ENCODE measurements at regions of chr19 and their contacts with region 1.

Region 1: DNA sequence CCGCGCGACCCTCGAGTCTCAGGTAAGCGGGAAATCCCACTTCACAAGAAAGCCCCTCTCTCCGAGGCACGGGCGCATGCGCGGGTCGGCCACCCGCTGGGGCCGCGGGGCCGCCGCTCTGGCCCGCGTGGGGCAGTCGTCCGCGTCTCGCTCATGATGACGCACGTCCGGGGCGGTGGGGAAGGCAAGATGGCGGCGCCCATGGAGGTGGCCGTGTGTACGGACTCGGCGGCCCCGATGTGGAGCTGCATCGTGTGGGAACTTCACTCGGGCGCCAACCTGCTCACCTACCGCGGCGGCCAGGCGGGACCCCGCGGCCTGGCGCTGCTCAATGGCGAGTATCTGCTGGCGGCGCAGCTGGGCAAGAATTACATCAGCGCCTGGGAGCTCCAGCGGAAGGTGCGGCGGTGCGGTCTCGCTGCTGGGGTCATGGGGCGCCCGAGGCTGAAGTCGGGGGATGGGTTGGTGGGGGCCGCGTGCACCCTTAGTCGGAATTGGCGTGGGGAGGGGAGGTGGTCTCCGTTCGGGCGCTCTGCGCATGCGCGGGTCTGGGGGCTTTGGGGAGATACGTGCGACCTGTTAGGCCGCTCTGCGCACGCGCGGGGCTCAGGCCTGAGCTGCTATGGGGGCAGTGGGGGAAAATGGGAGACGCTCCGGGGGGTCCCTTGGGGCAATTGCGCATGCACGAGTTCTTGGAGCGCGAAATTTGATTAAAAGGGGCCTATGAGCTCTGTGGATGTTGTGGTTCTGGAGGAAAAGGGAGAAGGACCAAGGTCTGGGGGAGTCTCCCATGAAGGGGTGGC is at the start of gene WDR18:
- DNase-seq: peak; percentile 79 to 87 (median 81)
- H3K4me3 ChIP-seq: peak within 1 kb of the TSS; percentile 65 to 69
- H3K4me3 Mint-ChIP-seq: peak within 1 kb of the TSS; percentile 89 to 96 (median 92)
- H3K27ac ChIP-seq: peak within 1 kb of the TSS; percentile 75
- H3K27ac Mint-ChIP-seq: peak within 1 kb of the TSS; percentile 84 to 96 (median 90)
- H3K4me1 ChIP-seq: peaks cover 24% of the 10 kb centered on the region
- H3K4me1 Mint-ChIP-seq: peaks cover 4 to 18% (median 12%) of the 10 kb centered on the region in 4 donors
- H3K27me3 ChIP-seq: no peaks in the 10 kb centered on the region
- H3K27me3 Mint-ChIP-seq: no peaks in the 10 kb centered on the region
- total RNA-seq, gene WDR18: 53.9 to 60.3 TPM

Region 2: DNA sequence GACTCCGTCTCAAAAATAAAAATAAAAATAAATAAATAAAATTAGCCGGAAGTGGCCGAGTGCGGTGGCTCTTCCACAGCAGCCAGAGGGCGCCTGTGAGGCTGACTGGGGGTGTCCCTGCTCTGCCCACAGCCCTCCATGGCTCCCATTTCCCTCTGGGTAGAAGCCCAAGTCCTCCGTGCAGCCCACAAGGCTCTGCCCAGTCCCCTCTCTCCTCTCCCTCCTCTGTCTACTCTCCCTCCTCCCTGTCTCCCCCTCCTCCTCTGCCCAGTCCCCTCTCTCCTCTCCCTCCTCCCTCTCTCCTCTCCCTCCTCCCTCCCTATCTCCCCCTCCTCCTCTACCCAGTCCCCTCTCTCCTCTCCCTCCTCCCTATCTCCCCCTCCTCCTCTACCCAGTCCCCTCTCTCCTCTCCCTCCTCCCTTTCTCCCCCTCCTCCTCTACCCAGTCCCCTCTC is 213.0 kb before region 1 on chr19:
- CTCF ChIA-PET with region 1: interaction called, 3 read pairs
- POLR2A ChIA-PET with region 1: no interaction called
- intact Hi-C with region 1: loop called (anchors 1 kb)
- DNase-seq: peak in 3 of 5 donors; percentile 15 to 18 (median 17)
- H3K4me3 ChIP-seq: no peak overlapping the region
- H3K4me3 Mint-ChIP-seq: no peak overlapping the region
- H3K27ac ChIP-seq: no peak overlapping the region
- H3K27ac Mint-ChIP-seq: no peak overlapping the region
- H3K4me1 ChIP-seq: no peaks in the 10 kb centered on the region
- H3K4me1 Mint-ChIP-seq: peaks cover 0 to 4% (median 2%) of the 10 kb centered on the region in 4 donors
- H3K27me3 ChIP-seq: no peaks in the 10 kb centered on the region
- H3K27me3 Mint-ChIP-seq: peaks cover 4% of the 10 kb centered on the region in 2 donors

Region 3: DNA sequence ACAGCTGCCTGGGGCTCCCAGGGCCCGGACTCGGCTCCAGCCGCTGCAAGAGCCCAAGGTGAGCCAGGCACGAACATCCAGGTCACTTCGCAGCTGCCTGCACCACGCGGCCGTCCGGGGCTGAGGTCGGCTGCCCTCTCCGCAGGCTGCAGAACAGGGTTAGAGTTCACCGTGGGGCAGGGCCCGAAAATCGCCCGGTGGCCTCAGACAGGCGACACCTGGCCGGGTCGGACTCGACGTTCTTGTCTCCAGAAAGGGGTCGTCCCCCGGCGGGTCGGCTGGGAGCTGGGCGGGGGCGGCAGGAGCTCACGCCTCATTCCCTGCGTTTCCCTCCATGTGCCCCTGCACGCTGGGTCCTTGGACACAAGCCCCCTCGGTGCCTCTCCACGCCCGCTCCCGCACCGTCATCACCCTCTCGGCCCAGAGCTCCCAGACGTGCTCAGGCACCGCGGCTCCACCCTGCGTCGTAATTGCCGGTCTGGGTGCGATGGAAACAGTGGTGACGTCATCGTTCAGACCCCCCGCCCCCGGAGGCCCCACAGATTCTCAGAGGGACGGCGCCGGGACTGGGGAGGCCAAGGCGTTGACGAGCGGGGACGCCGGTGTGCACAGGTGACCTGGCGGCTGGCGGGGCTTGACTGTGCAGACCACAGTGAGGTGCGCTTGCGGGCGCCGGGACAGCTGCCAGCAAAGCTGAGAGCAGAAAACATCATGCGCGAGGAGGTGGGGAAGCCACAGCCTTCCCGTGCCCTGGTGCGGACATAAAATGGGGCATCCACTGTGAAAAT is 11.9 kb after region 1 on chr19:
- CTCF ChIA-PET with region 1: interaction called, 3 read pairs
- POLR2A ChIA-PET with region 1: interaction called, 34 read pairs
- intact Hi-C with region 1: loop called (anchors 1 kb)
- DNase-seq: peak; percentile 78 to 96 (median 84)
- H3K4me3 ChIP-seq: peak overlapping the region in 1 of 2 donors; percentile 38
- H3K4me3 Mint-ChIP-seq: peak overlapping the region; percentile 55 to 88 (median 74)
- H3K27ac ChIP-seq: peak overlapping the region; percentile 37
- H3K27ac Mint-ChIP-seq: peak overlapping the region; percentile 81 to 99 (median 88)
- H3K4me1 ChIP-seq: peaks cover 21% of the 10 kb centered on the region
- H3K4me1 Mint-ChIP-seq: peaks cover 4 to 26% (median 14%) of the 10 kb centered on the region in 4 donors
- H3K27me3 ChIP-seq: peaks cover 23% of the 10 kb centered on the region
- H3K27me3 Mint-ChIP-seq: peaks cover 16 to 22% of the 10 kb centered on the region in 2 donors

Region 4: DNA sequence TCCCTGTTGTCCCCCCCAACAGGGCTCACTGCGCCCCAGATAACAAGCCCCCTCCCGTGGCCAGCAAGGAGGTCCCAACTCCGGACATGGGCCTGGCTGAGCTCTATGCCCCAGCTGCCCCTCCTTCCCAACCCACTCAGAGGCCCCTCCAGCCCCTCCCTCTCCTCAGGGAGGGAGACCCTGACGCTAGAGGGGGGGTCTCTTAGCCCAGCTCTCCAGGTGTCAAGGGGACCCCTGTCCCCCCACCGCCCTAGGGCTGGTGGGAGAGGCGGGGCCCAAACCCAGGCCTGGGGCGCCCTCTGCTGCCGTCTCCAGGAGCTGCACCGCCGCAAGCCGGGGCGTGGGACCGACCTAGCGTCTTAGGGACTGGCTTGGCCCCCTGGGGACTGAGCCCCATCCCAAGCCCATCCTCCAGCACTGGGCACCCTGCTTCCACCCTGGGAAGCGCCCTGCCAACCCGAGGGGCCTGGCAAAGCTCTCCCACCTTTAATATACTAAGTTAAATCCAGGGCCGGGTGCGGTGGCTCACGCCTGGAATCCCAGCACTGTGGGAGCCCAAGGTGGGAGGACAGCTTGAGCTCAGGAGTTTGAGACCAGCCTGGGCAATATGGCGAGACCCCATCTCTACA is 17.3 kb after region 1 on chr19:
- CTCF ChIA-PET with region 1: interaction called, 3 read pairs
- POLR2A ChIA-PET with region 1: interaction called, 34 read pairs
- intact Hi-C with region 1: loop called (anchors 1 kb)
- DNase-seq: peak; percentile 60 to 71 (median 61)
- H3K4me3 ChIP-seq: no peak overlapping the region
- H3K4me3 Mint-ChIP-seq: no peak overlapping the region
- H3K27ac ChIP-seq: no peak overlapping the region
- H3K27ac Mint-ChIP-seq: peak overlapping the region in 1 of 7 donors; percentile 21
- H3K4me1 ChIP-seq: peaks cover 15% of the 10 kb centered on the region
- H3K4me1 Mint-ChIP-seq: peaks cover 2 to 18% (median 10%) of the 10 kb centered on the region in 4 donors
- H3K27me3 ChIP-seq: peaks cover 26% of the 10 kb centered on the region
- H3K27me3 Mint-ChIP-seq: peaks cover 17 to 19% of the 10 kb centered on the region in 2 donors

Region 5: DNA sequence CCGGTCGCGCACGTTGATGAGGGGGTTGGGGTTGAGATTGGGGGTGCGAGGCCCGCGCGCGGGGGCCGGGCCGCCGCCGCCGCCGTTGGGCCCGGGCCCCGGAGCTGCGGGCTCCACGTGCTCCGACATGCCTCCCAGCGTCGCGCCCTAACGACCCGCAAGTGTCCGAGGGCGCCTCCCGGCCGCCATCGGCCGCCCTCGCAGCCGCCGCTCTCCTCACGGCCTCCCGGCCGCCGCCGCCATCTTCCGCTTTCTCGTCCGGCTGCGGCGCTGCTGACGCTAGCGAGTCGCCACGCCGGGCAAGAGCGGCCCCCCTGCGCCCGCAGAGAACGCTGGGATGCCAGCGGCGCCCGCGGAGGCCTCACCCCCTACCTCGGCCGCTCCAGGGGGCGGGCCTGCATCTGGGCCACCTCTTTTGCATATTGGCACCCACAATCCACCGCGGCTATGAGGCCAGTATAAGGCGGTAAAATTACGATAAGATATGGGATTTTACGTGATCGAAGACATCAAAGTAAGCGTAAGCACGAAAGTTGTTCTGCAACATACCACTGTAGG is 36.6 kb after region 1 on chr19 and contains the start of gene TMEM259:
- CTCF ChIA-PET with region 1: interaction called, 5 read pairs
- POLR2A ChIA-PET with region 1: interaction called, 9 read pairs
- intact Hi-C with region 1: loop called (anchors 1 kb)
- DNase-seq: peak; percentile 98 to 99 (median 98)
- H3K4me3 ChIP-seq: peak within 1 kb of the TSS; percentile 66 to 69
- H3K4me3 Mint-ChIP-seq: peak within 1 kb of the TSS; percentile 86 to 92 (median 89)
- H3K27ac ChIP-seq: peak within 1 kb of the TSS; percentile 95
- H3K27ac Mint-ChIP-seq: peak within 1 kb of the TSS; percentile 97 to 100 (median 100)
- H3K4me1 ChIP-seq: peaks cover 54% of the 10 kb centered on the region
- H3K4me1 Mint-ChIP-seq: peaks cover 19 to 62% (median 39%) of the 10 kb centered on the region in 4 donors
- H3K27me3 ChIP-seq: no peaks in the 10 kb centered on the region
- H3K27me3 Mint-ChIP-seq: peaks cover 0 to 6% of the 10 kb centered on the region in 2 donors
- total RNA-seq, gene TMEM259: 315 to 329 TPM

Measured in CD4-positive, alpha-beta memory T cell (primary cell).